GM13977 (cell line): ENCODE measurements at regions of chr4 and their contacts with region 1.

Region 1: DNA sequence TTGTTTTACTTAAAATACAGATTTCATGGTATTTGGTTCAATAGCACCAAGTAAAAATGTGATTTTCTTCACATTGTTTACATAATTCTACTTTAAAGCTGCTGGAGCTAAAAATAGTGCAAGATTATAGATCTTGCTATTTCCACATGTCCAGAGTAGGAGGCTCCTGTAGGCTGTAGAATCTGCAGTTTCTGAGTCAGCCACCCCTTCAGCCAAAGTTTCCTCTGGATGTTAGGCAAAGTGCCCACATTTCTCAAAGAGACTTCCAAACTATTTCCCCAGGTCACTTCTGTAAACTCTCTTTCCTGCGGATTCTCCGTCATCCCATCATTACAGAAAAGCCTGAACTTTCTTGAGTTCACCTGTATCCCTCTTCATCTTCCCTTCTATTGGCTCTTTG is 342.5 kb upstream of the FSTL5 start:
- DNase-seq: no peak
- CTCF ChIP-seq: no peak

Region 2: DNA sequence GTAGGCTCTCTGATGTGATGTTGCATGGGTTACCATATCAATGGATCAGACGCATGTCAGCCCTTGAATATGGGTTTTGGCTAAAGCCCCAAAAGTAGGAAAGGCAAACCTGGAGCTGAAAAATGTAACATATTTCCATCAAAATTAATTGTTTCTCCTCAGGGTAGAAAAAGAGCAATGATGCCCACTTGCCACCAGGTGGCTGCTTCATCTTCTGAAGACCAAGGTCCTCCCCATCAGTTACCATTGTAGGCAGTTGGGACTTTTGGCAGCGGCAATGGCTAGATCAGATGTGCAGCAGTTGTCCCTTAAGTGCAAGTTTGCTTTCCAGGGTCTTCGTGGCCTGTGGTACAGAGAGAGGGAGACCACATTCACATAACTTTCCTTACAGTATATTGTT is 542.2 kb after region 1 on chr4:
- in situ Hi-C with region 1: loop called (anchors 25 kb)
- DNase-seq: peak; percentile 19
- CTCF ChIP-seq: peak; percentile 59